ENCODE measurements at regions of chr11 and their contacts with region 1.

Region 1: GRCh38 chr11:121591405-121592033 is 138.8 kb upstream of the SORL1-AS1 start:
- DNase-seq: no peak
- H3K4me3 ChIP-seq: no peak overlapping the region
- H3K27ac ChIP-seq: peak overlapping the region in 3 of 4 donors; percentile 77 to 82 (median 80)
- H3K4me1 ChIP-seq: peaks cover 0 to 51% (median 42%) of the 10 kb centered on the region in 4 donors
- H3K27me3 ChIP-seq: no peaks in the 10 kb centered on the region
- CTCF ChIP-seq: peak; percentile 85 to 90 (median 89)
- EP300 ChIP-seq: no peak
- POLR2A ChIP-seq: no peak

Region 2: GRCh38 chr11:121249039-121249663 is 342.4 kb before region 1 on chr11:
- intact Hi-C with region 1: loop called (anchors 2 kb)
- DNase-seq: no peak
- H3K4me3 ChIP-seq: no peak overlapping the region
- H3K27ac ChIP-seq: no peak overlapping the region
- H3K4me1 ChIP-seq: peaks cover 0 to 8% (median 0%) of the 10 kb centered on the region in 4 donors
- H3K27me3 ChIP-seq: no peaks in the 10 kb centered on the region
- CTCF ChIP-seq: peak; percentile 74 to 91 (median 84)
- EP300 ChIP-seq: no peak
- POLR2A ChIP-seq: no peak

Region 3: GRCh38 chr11:121321614-121322243 is 269.8 kb before region 1 on chr11:
- intact Hi-C with region 1: loop called (anchors 2 kb)
- DNase-seq: no peak
- H3K4me3 ChIP-seq: no peak overlapping the region
- H3K27ac ChIP-seq: no peak overlapping the region
- H3K4me1 ChIP-seq: no peaks in the 10 kb centered on the region
- H3K27me3 ChIP-seq: no peaks in the 10 kb centered on the region
- CTCF ChIP-seq: peak; percentile 43 to 49 (median 46)
- EP300 ChIP-seq: no peak
- POLR2A ChIP-seq: no peak

Region 4: DNA sequence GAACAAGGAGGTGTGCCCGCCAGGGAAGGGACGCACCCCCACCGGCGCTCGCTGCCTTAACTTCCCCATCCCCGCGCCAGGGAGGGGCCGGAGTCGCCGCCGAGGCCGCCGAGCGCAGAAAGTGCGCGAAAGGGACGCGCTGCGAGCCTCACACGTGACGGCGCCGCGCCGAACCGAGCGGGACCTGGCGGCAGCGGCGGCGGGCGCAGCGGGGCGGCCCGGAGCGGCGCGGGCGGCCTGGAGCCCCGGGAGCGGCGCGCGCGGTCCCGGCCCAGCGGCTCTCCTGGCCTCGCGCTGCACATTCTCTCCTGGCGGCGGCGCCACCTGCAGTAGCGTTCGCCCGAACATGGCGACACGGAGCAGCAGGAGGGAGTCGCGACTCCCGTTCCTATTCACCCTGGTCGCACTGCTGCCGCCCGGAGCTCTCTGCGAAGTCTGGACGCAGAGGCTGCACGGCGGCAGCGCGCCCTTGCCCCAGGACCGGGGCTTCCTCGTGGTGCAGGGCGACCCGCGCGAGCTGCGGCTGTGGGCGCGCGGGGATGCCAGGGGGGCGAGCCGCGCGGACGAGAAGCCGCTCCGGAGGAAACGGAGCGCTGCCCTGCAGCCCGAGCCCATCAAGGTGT is 139.4 kb before region 1 on chr11 and contains the start of gene SORL1:
- intact Hi-C with region 1: loop called (anchors 5 kb)
- DNase-seq: no peak
- H3K4me3 ChIP-seq: peak within 1 kb of the TSS; percentile 78 to 90 (median 81)
- H3K27ac ChIP-seq: peak within 1 kb of the TSS; percentile 40 to 66 (median 60)
- H3K4me1 ChIP-seq: peaks cover 4 to 28% (median 23%) of the 10 kb centered on the region in 4 donors
- H3K27me3 ChIP-seq: peaks cover 0 to 13% (median 0%) of the 10 kb centered on the region in 4 donors
- CTCF ChIP-seq: peak; percentile 63 to 67 (median 67)
- EP300 ChIP-seq: no peak
- POLR2A ChIP-seq: no peak
- total RNA-seq, gene SORL1: 3.0 to 12.3 (median 8.1) TPM